Adrenal gland (tissue), 19 donors: ENCODE measurements at regions of chrX and their contacts with region 1.

Region 1: DNA sequence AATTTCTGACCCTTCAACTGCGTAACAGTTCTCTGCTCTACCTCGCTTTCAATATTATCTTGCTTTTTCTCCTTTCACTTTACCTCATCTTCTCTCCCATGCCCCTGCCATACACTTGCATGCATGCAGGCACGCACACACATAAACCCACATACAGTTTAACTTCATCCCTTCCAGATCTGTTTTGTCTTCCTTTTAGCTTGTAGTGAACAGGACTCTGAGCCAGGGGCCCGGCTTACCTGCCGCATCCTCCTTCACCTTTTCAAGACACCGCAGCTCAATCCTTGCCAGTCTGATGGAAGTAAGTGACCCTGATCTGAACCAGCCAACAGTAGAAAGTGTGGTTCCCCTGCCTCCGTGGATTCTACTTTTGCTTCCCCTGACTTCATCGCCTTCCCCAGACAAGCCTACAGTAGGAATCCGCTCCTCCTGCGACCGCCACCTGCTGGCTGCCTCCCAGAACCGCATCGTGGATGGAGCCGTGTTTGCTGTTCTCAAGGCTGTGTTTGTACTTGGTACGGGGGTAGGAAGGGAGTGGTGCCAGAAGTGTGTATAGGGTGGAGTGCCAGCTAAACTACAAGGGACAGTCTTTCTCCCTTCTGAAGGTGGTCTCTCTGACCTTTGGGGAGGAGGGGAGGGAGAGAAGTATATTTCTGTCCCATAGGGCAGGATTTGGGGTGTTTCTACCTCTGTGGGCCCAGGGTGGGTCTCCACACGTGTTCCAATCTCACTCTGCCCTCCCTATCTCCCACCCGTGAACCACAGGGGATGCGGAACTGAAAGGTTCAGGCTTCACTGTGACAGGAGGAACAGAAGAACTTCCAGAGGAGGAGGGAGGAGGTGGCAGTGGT is 10.7 kb downstream of the MED12 start:
- DNase-seq: peak; percentile 67 to 85 (median 76)
- H3K4me3 ChIP-seq: no peak overlapping the region
- H3K27ac ChIP-seq: peak overlapping the region in 3 of 5 donors; percentile 48 to 85 (median 53)
- H3K4me1 ChIP-seq: peaks cover 0 to 2% of the 10 kb centered on the region in 2 donors
- H3K27me3 ChIP-seq: no peaks in the 10 kb centered on the region
- CTCF ChIP-seq: peak; percentile 55 to 82 (median 70)
- POLR2A ChIP-seq: no peak

Region 2: GRCh38 chrX:71068049-71068763 is 60.9 kb before region 1 on chrX and contains the start of gene SNX12:
- intact Hi-C with region 1: loop called in 1 of 2 experiments (anchors 5 kb)
- DNase-seq: peak; percentile 87 to 98 (median 94)
- H3K4me3 ChIP-seq: peak within 1 kb of the TSS in 2 of 4 donors; percentile 40 to 55
- H3K27ac ChIP-seq: peak within 1 kb of the TSS; percentile 53 to 88 (median 78)
- H3K4me1 ChIP-seq: peaks cover 0 to 6% of the 10 kb centered on the region in 2 donors
- H3K27me3 ChIP-seq: peaks cover 6% of the 10 kb centered on the region
- CTCF ChIP-seq: peak in 4 of 6 experiments; percentile 40 to 96 (median 80)
- POLR2A ChIP-seq: peak in 1 of 2 donors; percentile 71
- total RNA-seq, gene SNX12: 68.0 to 101 (median 81.0) TPM